Posterior cingulate gyrus (tissue), 11 donors: ENCODE measurements at regions of chr11 and their contacts with region 1.

Region 1: GRCh38 chr11:126211235-126212088 is at the starts of genes FAM118B and RPUSD4:
- DNase-seq: peak; percentile 98 to 100 (median 99)

Region 2: GRCh38 chr11:126268708-126269579 is 57.5 kb after region 1 on chr11 and contains the starts of genes FOXRED1 and SRPRA:
- intact Hi-C with region 1: loop called (anchors 5 kb)
- DNase-seq: peak; percentile 99 to 100 (median 100)